ENCODE measurements at regions of chrX and their contacts with region 1.

Region 1: DNA sequence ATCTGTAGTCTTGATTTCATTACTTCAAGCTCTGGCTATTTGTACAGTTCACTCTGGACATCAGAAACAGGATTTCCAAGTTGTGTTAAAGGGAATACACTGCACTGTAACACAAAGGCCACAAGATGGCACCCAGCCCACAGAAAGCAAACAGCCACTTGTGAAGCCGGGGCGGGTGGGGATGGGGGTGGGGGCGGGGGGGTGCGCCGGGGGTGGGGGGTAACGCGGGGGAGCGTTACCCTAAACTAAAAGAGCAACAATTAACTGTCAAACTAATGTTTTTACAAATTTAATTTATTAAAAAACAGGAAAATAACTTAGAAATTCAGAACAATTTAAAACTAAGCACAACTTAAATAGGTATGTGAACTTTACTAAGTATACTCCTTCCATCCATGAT is 27.3 kb downstream of the PRDX4 start:
- DNase-seq: peak; percentile 72
- ATAC-seq: peak; percentile 62

Region 2: GRCh38 chrX:21839334-21840192 is 1855.0 kb before region 1 on chrX and contains the start of gene MBTPS2:
- intact Hi-C with region 1: no loop called
- DNase-seq: peak; percentile 89
- ATAC-seq: peak; percentile 96
- total RNA-seq, gene MBTPS2: 15.2 TPM

Region 3: GRCh38 chrX:23901805-23902204 is 207.2 kb after region 1 on chrX:
- intact Hi-C with region 1: loop called (anchors 5 kb)
- DNase-seq: no peak
- ATAC-seq: peak; percentile 93